ENCODE measurements at regions of chr6 and their contacts with region 1.

Region 1: DNA sequence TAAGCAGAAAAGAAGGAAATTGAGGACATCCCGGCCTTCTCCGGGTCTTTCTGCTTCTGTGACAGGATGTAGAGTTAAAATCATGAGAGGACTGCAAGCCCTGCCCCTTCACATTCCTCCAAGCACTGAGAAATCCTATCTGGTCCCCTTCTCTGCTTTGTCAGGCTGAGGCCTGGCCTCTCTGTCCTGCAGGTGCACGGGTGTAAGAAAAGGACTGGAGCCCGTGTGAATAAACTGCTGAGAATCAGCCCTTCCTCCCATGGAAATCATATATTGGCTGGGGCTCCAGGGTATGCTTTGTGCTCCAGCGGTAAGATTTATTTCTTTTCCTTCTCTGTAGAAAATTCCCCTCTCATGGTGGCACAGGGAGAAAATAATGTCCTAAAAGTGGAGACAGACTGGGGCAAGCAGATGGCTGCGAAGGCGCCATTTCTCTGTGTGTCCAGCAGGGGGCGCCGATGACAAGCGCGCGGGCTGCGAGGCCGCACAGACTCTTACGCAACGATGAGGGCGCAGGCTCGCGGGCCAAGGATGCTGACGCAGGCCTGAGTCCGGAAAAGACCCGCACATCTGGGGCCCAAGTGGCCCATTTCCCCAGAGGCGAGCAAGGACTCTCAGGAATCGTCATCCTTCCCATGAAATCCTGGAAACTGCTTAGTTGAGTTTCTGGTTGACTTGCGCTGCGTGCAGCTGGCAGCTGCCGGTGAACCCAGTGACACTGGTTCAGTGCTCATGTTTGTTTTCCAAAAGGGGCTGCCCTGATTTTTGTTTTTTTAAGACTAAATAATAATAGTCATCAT is 258.6 kb downstream of the ADGB start:
- DNase-seq: peak; percentile 60 to 80
- ATAC-seq: peak; percentile 85 to 98 (median 90)
- H3K4me3 ChIP-seq: no peak overlapping the region
- H3K4me3 Mint-ChIP-seq: peak overlapping the region; percentile 26
- H3K27ac ChIP-seq: no peak overlapping the region
- H3K27ac Mint-ChIP-seq: no peak overlapping the region
- H3K4me1 ChIP-seq: peaks cover 5% of the 10 kb centered on the region
- H3K4me1 Mint-ChIP-seq: peaks cover 7% of the 10 kb centered on the region in 2 donors
- H3K27me3 ChIP-seq: no peaks in the 10 kb centered on the region
- H3K27me3 Mint-ChIP-seq: no peaks in the 10 kb centered on the region
- CTCF ChIP-seq: peak; percentile 94

Region 2: DNA sequence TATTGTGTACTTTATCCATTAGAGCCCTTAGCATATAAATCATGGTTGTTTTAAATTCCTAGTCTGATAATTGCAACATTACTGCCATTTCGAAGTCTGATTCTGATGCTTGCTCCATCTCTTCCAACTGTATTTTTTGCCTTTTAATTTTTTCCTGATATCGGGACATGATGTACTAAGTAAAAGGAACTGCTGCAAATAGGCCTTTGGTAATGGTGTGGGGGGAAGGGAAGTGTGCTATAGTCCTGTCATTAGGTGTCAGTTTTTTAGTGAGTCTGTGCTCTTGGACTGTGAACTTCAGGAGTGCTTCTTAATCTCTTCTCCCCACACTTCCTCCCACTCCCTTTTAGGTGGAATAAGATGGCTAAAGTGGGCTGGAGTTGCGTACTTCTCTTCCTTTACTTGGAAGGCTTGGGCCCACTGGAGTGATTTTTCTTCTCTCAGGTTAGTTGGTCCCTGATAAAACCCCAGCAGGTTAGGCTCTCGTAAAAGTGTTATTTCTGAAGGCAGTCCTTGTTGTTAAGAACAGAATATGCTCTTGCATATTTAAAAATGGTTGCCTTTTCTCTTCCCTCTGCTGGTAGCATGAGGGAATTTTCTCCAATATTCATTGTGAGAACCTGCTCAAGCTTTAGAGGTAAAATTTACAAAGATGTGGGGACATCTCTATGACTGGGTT is 364.9 kb after region 1 on chr6:
- intact Hi-C with region 1: loop called (anchors 5 kb)
- DNase-seq: peak in 1 of 2 donors; percentile 50
- ATAC-seq: no peak
- H3K4me3 ChIP-seq: no peak overlapping the region
- H3K4me3 Mint-ChIP-seq: no peak overlapping the region
- H3K27ac ChIP-seq: no peak overlapping the region
- H3K27ac Mint-ChIP-seq: no peak overlapping the region
- H3K4me1 ChIP-seq: no peaks in the 10 kb centered on the region
- H3K4me1 Mint-ChIP-seq: peaks cover 36 to 52% of the 10 kb centered on the region in 2 donors
- H3K27me3 ChIP-seq: no peaks in the 10 kb centered on the region
- H3K27me3 Mint-ChIP-seq: no peaks in the 10 kb centered on the region
- CTCF ChIP-seq: peak; percentile 20

Region 3: GRCh38 chr6:147285087-147285855 is 427.9 kb after region 1 on chr6:
- intact Hi-C with region 1: loop called (anchors 2 kb)
- DNase-seq: peak in 1 of 2 donors; percentile 58
- ATAC-seq: peak in 1 of 3 donors; percentile 52
- H3K4me3 ChIP-seq: no peak overlapping the region
- H3K4me3 Mint-ChIP-seq: no peak overlapping the region
- H3K27ac ChIP-seq: no peak overlapping the region
- H3K27ac Mint-ChIP-seq: peak overlapping the region; percentile 5 to 9
- H3K4me1 ChIP-seq: no peaks in the 10 kb centered on the region
- H3K4me1 Mint-ChIP-seq: peaks cover 39 to 41% of the 10 kb centered on the region in 2 donors
- H3K27me3 ChIP-seq: no peaks in the 10 kb centered on the region
- H3K27me3 Mint-ChIP-seq: no peaks in the 10 kb centered on the region
- CTCF ChIP-seq: peak; percentile 44